ENCODE measurements at regions of chr15 and their contacts with region 1.

Region 1: GRCh38 chr15:65610871-65611718 is at the start of gene INTS14:
- DNase-seq: peak; percentile 67
- ATAC-seq: peak; percentile 99
- H3K4me3 ChIP-seq: peak within 1 kb of the TSS; percentile 88
- H3K27ac ChIP-seq: peak within 1 kb of the TSS; percentile 76
- H3K4me1 ChIP-seq: peaks cover 7% of the 10 kb centered on the region
- H3K27me3 ChIP-seq: no peaks in the 10 kb centered on the region
- CTCF ChIP-seq: peak; percentile 63 to 92 (median 67)
- EP300 ChIP-seq: peak in 1 of 2 experiments; percentile 27; a peak in 1 of 4 replicates
- POLR2A ChIP-seq: peak; percentile 88
- RAD21 ChIP-seq: peak; percentile 41; the same call in 1 of the 2 replicates
- polyA plus RNA-seq, gene INTS14: 39.4 to 41.9 TPM

Region 2: DNA sequence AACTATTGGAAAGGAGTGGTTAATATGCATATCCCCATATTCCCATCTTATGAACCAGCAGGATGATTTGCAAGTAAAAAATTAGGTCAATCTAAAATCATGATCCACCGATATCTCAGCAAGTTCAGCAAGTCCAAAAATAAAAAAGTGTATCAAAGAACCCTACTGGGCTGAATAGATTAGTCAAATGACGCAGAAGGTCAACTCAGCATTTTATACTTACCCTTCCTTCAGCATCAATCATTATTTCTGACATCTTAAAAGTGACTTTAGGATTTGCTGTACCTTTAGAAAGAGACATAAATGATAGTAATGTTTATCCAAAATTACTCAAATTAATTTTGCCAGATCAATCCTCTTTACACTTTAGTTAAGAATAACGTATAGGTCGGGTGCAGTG is 126.2 kb before region 1 on chr15:
- CTCF ChIA-PET with region 1: no interaction called
- POLR2A ChIA-PET with region 1: no interaction called
- RAD21 ChIA-PET with region 1: no interaction called
- SMC1A ChIA-PET with region 1: no interaction called
- in situ Hi-C with region 1: no loop called
- intact Hi-C with region 1: no loop called
- DNase-seq: no peak
- ATAC-seq: no peak
- H3K4me3 ChIP-seq: no peak overlapping the region
- H3K27ac ChIP-seq: no peak overlapping the region
- H3K4me1 ChIP-seq: no peaks in the 10 kb centered on the region
- H3K27me3 ChIP-seq: no peaks in the 10 kb centered on the region
- CTCF ChIP-seq: no peak
- EP300 ChIP-seq: no peak
- POLR2A ChIP-seq: no peak
- RAD21 ChIP-seq: no peak

Region 3: DNA sequence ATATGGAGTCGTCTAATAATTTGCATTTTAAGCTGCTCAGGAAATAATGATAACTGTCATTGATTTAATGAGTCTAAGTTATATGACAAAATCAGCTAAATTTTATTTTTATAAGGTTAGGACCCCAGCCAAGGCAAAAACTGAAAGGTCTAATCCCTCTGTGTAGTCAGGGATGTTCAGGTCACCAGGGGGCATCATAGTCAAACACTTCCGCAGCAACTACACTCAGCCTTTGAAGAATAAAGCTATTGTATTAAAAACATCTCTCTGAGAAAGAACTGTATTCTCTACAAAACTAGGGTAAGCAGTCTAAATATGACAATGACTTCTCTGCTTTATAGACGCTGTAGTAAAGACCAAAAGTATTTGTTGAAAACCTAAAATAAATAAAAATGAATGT is 15.1 kb before region 1 on chr15:
- CTCF ChIA-PET with region 1: interaction called, 6 read pairs
- POLR2A ChIA-PET with region 1: no interaction called
- RAD21 ChIA-PET with region 1: no interaction called
- SMC1A ChIA-PET with region 1: interaction called, 10 read pairs
- in situ Hi-C with region 1: no loop called
- intact Hi-C with region 1: no loop called
- DNase-seq: no peak
- ATAC-seq: peak; percentile 47; the same call in 2 of the 3 replicates
- H3K4me3 ChIP-seq: no peak overlapping the region
- H3K27ac ChIP-seq: no peak overlapping the region
- H3K4me1 ChIP-seq: no peaks in the 10 kb centered on the region
- H3K27me3 ChIP-seq: no peaks in the 10 kb centered on the region
- CTCF ChIP-seq: peak; percentile 19 to 45 (median 34); a peak in 4 of 6 replicates
- EP300 ChIP-seq: no peak
- POLR2A ChIP-seq: no peak
- RAD21 ChIP-seq: peak; percentile 57